Activated T-helper 2 cell treated with anti-CD3 and anti-CD28 coated beads, Interferon-gamma antibody, Interleukin-2, Interleukin-4, amounts not matched to agents 10 μg/mL and 5 μg/mL and 100 μg/mL, durations not matched to agents 14 hours and 24 hours and 36 hours (primary cell): ENCODE measurements at regions of chr9 and their contacts with region 1.

Region 1: DNA sequence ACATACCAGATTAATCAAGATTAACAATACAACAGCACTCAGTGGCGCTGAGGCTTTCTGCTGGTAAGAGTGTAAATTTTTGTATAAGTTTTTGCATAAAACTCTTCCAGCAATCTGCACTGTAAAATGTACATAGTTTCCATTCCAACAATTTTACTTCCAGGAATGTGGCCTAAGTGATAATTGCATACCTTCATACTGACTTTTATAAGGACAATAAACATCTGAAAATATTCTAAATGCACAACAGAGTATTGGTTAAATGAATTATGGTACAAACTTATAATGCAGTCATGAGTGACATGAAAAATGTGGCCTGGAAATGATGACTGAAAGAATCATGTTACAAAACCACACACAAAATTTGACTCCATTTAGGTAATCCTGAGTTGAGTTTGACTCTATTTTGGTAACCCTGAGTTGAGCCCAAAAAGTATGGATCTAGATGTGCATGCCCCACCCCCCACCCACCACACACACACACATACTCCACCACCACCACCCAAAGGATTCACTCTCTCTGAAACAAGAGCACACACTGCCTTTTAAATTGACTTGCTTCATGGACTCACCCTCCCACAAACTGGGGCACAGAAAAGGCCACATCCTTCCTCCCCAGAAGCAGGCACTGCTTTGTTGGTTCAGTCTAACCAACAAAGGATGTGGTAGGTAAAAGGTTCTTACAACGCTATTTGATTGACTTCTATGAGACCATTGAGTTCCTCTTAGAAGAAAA is 137.6 kb downstream of the SUSD1 start:
- DNase-seq: peak; percentile 70
- H3K4me3 Mint-ChIP-seq: no peak overlapping the region
- H3K27ac Mint-ChIP-seq: peak overlapping the region; percentile 76
- H3K4me1 Mint-ChIP-seq: peaks cover 36% of the 10 kb centered on the region
- H3K27me3 Mint-ChIP-seq: peaks cover 33% of the 10 kb centered on the region

Region 2: GRCh38 chr9:111870774-111871498 is 166.5 kb before region 1 on chr9:
- intact Hi-C with region 1: loop called (anchors 1 kb)
- DNase-seq: peak; percentile 11
- H3K4me3 Mint-ChIP-seq: no peak overlapping the region
- H3K27ac Mint-ChIP-seq: no peak overlapping the region
- H3K4me1 Mint-ChIP-seq: peaks cover 18% of the 10 kb centered on the region
- H3K27me3 Mint-ChIP-seq: peaks cover 50% of the 10 kb centered on the region

Region 3: GRCh38 chr9:111992523-111992922 is 44.9 kb before region 1 on chr9:
- intact Hi-C with region 1: loop called (anchors 1 kb)
- DNase-seq: no peak
- H3K4me3 Mint-ChIP-seq: no peak overlapping the region
- H3K27ac Mint-ChIP-seq: no peak overlapping the region
- H3K4me1 Mint-ChIP-seq: peaks cover 18% of the 10 kb centered on the region
- H3K27me3 Mint-ChIP-seq: peaks cover 9% of the 10 kb centered on the region

Region 4: GRCh38 chr9:112020680-112021596 is 16.5 kb before region 1 on chr9:
- intact Hi-C with region 1: loop called (anchors 2 kb)
- DNase-seq: no peak
- H3K4me3 Mint-ChIP-seq: no peak overlapping the region
- H3K27ac Mint-ChIP-seq: no peak overlapping the region
- H3K4me1 Mint-ChIP-seq: peaks cover 7% of the 10 kb centered on the region
- H3K27me3 Mint-ChIP-seq: peaks cover 27% of the 10 kb centered on the region

Region 5: DNA sequence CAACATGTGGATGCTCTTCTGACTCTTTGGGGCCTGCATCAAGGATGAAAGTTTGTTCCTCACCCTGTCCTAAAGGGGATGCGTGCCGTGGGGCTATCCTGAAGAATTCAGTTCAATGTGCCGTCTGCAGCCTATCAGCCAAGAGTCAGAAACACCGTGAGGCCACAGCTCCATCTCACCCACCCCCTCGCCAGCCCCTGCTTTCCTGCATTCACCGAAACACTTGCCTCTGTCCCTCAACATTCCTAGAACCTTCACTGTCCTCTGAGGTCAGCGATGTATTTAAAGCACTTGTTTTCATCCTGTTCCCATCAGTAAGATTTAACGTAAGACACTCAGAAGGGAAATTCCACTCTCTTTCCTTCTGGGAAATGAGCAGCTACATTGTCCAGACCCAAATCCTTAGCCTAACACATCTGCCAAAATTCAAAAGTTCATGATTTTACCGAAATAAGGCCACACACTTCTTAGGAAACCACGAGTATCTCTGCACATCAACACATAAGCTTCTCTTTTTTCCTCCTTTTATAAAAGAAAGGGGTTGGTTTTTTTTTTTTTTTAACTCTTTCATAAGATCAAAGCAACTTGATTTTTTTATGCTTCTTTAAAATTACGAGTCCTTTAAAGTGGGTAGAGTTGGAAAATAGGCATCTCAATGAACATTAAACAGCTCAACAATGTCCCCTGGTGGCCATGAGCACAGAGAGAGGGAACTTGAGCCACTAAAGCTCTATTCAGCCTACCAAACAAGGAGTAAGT is 37.0 kb after region 1 on chr9:
- intact Hi-C with region 1: loop called (anchors 5 kb)
- DNase-seq: peak; percentile 31
- H3K4me3 Mint-ChIP-seq: no peak overlapping the region
- H3K27ac Mint-ChIP-seq: no peak overlapping the region
- H3K4me1 Mint-ChIP-seq: peaks cover 9% of the 10 kb centered on the region
- H3K27me3 Mint-ChIP-seq: peaks cover 1% of the 10 kb centered on the region